ENCODE measurements at regions of chr17 and their contacts with region 1.

Region 1: GRCh38 chr17:29241015-29241963 is 5.4 kb upstream of the CRYBA1 start:
- DNase-seq: peak; percentile 96 to 97
- ATAC-seq: peak; percentile 95 to 98
- H3K4me3 ChIP-seq: no peak overlapping the region
- H3K27ac ChIP-seq: peak overlapping the region; percentile 93
- H3K4me1 ChIP-seq: peaks cover 49% of the 10 kb centered on the region
- CTCF ChIP-seq: no peak
- EP300 ChIP-seq: peak in 1 of 2 experiments; percentile 71; a peak in 1 of 5 replicates
- POLR2A ChIP-seq: no peak
- RAD21 ChIP-seq: peak; percentile 27 to 45; a peak in 2 of 5 replicates

Region 2: GRCh38 chr17:29124117-29124924 is 117.0 kb before region 1 on chr17:
- CTCF ChIA-PET with region 1: interaction called, 10 read pairs
- POLR2A ChIA-PET with region 1: no interaction called
- DNase-seq: peak; percentile 82 to 83
- ATAC-seq: peak; percentile 83 to 93
- H3K4me3 ChIP-seq: no peak overlapping the region
- H3K27ac ChIP-seq: peak overlapping the region in 1 of 2 experiments; percentile 39; a peak in 3 of 6 replicates
- H3K4me1 ChIP-seq: peaks cover 16% of the 10 kb centered on the region
- CTCF ChIP-seq: peak; percentile 88
- EP300 ChIP-seq: no peak
- POLR2A ChIP-seq: no peak
- RAD21 ChIP-seq: peak; percentile 88 to 96

Region 3: GRCh38 chr17:29225396-29225795 is 15.9 kb before region 1 on chr17:
- CTCF ChIA-PET with region 1: interaction called, 81 read pairs
- POLR2A ChIA-PET with region 1: no interaction called
- DNase-seq: no peak
- ATAC-seq: peak in 1 of 2 experiments; percentile 24; a peak in 2 of 6 replicates
- H3K4me3 ChIP-seq: no peak overlapping the region
- H3K27ac ChIP-seq: peak overlapping the region in 1 of 2 experiments; percentile 34; a peak in 1 of 6 replicates
- H3K4me1 ChIP-seq: peaks cover 5% of the 10 kb centered on the region; the same call in 1 of the 3 replicates
- CTCF ChIP-seq: no peak
- EP300 ChIP-seq: no peak
- POLR2A ChIP-seq: no peak
- RAD21 ChIP-seq: no peak

Measured in A549 (cell line).